Activated naive CD4-positive, alpha-beta T cell treated with anti-CD3 and anti-CD28 coated beads for 36 hours (primary cell): ENCODE measurements at regions of chr4 and their contacts with region 1.

Region 1: DNA sequence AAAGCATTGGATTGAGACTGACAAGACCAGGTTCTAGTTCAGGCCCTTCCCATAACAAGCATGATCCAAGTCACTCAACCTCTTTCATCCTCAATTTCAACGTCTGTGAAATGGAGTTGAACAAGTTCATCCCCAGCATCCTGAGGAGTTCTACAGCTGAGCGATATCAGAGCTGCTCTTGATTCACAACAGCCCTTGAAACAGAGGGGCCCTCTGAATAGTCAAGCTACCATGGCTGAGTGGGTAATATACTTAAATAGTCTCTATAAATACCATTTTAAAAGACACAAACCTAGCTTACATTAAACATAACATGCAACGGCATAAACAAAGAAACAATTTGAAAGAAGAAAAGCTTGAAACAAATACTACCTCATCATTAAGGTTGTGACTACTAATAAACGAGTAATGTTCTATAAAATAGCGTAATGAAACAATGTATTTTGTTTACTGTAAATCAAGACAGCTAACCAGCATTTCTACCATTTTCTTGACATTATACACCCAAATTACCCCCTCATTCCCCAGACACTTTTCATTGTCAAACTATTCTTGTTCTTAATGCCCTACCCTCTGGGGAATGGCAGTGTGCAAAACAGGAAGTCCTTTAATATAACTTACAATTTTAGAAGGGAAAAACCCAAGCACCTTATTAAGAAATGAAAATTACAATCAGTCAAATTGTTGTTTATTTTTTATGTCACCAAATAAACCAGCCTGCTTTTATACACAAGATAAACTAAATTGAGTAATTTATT is 202.3 kb downstream of the PARM1 start:
- DNase-seq: no peak
- H3K4me3 Mint-ChIP-seq: no peak overlapping the region
- H3K27ac Mint-ChIP-seq: no peak overlapping the region
- H3K4me1 Mint-ChIP-seq: no peaks in the 10 kb centered on the region
- H3K27me3 Mint-ChIP-seq: no peaks in the 10 kb centered on the region

Region 2: GRCh38 chr4:76023389-76023788 is 888.1 kb after region 1 on chr4 and contains the start of gene CXCL10:
- CTCF ChIA-PET with region 1: no interaction called
- intact Hi-C with region 1: no loop called
- DNase-seq: no peak
- H3K4me3 Mint-ChIP-seq: no peak within 1 kb of the TSS
- H3K27ac Mint-ChIP-seq: no peak within 1 kb of the TSS
- H3K4me1 Mint-ChIP-seq: peaks cover 30% of the 10 kb centered on the region
- H3K27me3 Mint-ChIP-seq: peaks cover 8% of the 10 kb centered on the region
- total RNA-seq, gene CXCL10: 0.41 to 0.64 TPM

Region 3: GRCh38 chr4:76758290-76758882 is 1623.1 kb after region 1 on chr4:
- CTCF ChIA-PET with region 1: no interaction called
- intact Hi-C with region 1: loop called (anchors 5 kb)
- DNase-seq: no peak
- H3K4me3 Mint-ChIP-seq: no peak overlapping the region
- H3K27ac Mint-ChIP-seq: no peak overlapping the region
- H3K4me1 Mint-ChIP-seq: peaks cover 11% of the 10 kb centered on the region
- H3K27me3 Mint-ChIP-seq: peaks cover 6% of the 10 kb centered on the region